Colonic mucosa (tissue), 4 donors: ENCODE measurements at regions of chr2 and their contacts with region 1.

Region 1: GRCh38 chr2:204306667-204307066 is 238.6 kb upstream of the PARD3B start:
- DNase-seq: no peak
- H3K4me3 ChIP-seq: no peak overlapping the region
- H3K27ac ChIP-seq: no peak overlapping the region
- H3K4me1 ChIP-seq: no peaks in the 10 kb centered on the region
- H3K27me3 ChIP-seq: no peaks in the 10 kb centered on the region
- CTCF ChIP-seq: no peak

Region 2: GRCh38 chr2:204234879-204235278 is 71.8 kb before region 1 on chr2:
- intact Hi-C with region 1: no loop called
- DNase-seq: no peak
- H3K4me3 ChIP-seq: no peak overlapping the region
- H3K27ac ChIP-seq: no peak overlapping the region
- H3K4me1 ChIP-seq: no peaks in the 10 kb centered on the region
- H3K27me3 ChIP-seq: no peaks in the 10 kb centered on the region
- CTCF ChIP-seq: no peak

Region 3: GRCh38 chr2:204282525-204282924 is 24.1 kb before region 1 on chr2:
- intact Hi-C with region 1: loop called (anchors 1 kb)
- DNase-seq: no peak
- H3K4me3 ChIP-seq: no peak overlapping the region
- H3K27ac ChIP-seq: no peak overlapping the region
- H3K4me1 ChIP-seq: no peaks in the 10 kb centered on the region
- H3K27me3 ChIP-seq: no peaks in the 10 kb centered on the region
- CTCF ChIP-seq: no peak